Mammary epithelial cell (primary cell): ENCODE measurements at regions of chr20 and their contacts with region 1.

Region 1: GRCh38 chr20:41339507-41340326 is 904 bp upstream of the LPIN3 start:
- DNase-seq: peak; percentile 87
- H3K4me3 ChIP-seq: peak overlapping the region; percentile 28 to 47 (median 29)
- H3K27ac ChIP-seq: peak overlapping the region; percentile 64
- H3K4me1 ChIP-seq: peaks cover 20% of the 10 kb centered on the region
- H3K27me3 ChIP-seq: no peaks in the 10 kb centered on the region
- CTCF ChIP-seq: peak; percentile 88 to 97

Region 2: GRCh38 chr20:40144581-40144980 is 1195.1 kb before region 1 on chr20:
- CTCF ChIA-PET with region 1: interaction called, 12 read pairs
- dilution Hi-C with region 1: no loop called
- in situ Hi-C with region 1: no loop called
- intact Hi-C with region 1: no loop called
- DNase-seq: no peak
- H3K4me3 ChIP-seq: no peak overlapping the region
- H3K27ac ChIP-seq: no peak overlapping the region
- H3K4me1 ChIP-seq: no peaks in the 10 kb centered on the region
- H3K27me3 ChIP-seq: no peaks in the 10 kb centered on the region
- CTCF ChIP-seq: no peak

Region 3: DNA sequence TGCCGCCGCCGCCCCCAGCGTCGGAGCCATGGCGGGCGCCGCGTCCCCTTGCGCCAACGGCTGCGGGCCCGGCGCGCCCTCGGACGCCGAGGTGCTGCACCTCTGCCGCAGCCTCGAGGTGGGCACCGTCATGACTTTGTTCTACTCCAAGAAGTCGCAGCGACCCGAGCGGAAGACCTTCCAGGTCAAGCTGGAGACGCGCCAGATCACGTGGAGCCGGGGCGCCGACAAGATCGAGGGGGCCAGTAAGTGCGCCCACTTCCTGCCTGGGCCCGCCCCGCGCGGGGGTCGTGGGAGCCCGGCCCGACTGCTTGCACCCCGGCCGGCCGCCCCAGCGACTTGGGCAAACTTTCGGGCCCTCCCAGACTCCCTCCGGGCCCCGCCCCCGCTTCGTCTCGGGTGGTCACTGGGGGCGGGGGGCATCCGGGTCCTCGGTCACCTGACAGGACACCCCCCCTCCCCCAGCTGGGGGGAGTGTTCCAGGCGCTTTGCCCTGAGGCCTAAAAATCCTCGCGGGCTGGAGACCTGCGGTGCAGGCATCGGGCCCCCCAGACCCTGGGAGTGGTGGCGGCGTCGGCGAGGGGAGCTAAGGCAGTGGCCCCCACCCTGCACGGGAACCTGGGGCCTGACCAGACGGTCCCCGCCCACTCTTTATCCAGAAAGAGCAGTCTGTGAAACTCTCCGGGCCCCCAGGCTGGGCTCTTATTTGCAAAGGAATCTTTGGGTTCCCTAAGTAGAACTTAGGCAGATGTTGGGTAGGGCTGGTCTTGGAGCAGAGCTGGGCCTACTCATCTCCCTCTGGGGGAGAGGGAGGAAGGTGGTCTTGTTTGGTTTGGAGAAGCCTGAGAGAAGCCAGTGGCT is 201.9 kb before region 1 on chr20:
- CTCF ChIA-PET with region 1: interaction called, 3 read pairs
- dilution Hi-C with region 1: no loop called
- in situ Hi-C with region 1: no loop called
- intact Hi-C with region 1: loop called (anchors 1 kb)
- DNase-seq: peak; percentile 28
- H3K4me3 ChIP-seq: peak overlapping the region; percentile 60 to 83 (median 71)
- H3K27ac ChIP-seq: peak overlapping the region; percentile 55
- H3K4me1 ChIP-seq: peaks cover 56% of the 10 kb centered on the region
- H3K27me3 ChIP-seq: no peaks in the 10 kb centered on the region
- CTCF ChIP-seq: no peak

Region 4: GRCh38 chr20:41232973-41233926 is 106.5 kb before region 1 on chr20:
- CTCF ChIA-PET with region 1: interaction called, 3 read pairs
- dilution Hi-C with region 1: no loop called
- in situ Hi-C with region 1: loop called in 1 of 2 experiments (anchors 10 kb)
- intact Hi-C with region 1: loop called (anchors 1 kb)
- DNase-seq: peak; percentile 80
- H3K4me3 ChIP-seq: no peak overlapping the region
- H3K27ac ChIP-seq: peak overlapping the region; percentile 98
- H3K4me1 ChIP-seq: peaks cover 35% of the 10 kb centered on the region
- H3K27me3 ChIP-seq: no peaks in the 10 kb centered on the region
- CTCF ChIP-seq: no peak

Region 5: GRCh38 chr20:41329435-41330342 is 10.0 kb before region 1 on chr20:
- CTCF ChIA-PET with region 1: no interaction called
- dilution Hi-C with region 1: no loop called
- in situ Hi-C with region 1: no loop called
- intact Hi-C with region 1: no loop called
- DNase-seq: peak; percentile 95
- H3K4me3 ChIP-seq: no peak overlapping the region
- H3K27ac ChIP-seq: peak overlapping the region; percentile 71
- H3K4me1 ChIP-seq: peaks cover 22% of the 10 kb centered on the region
- H3K27me3 ChIP-seq: no peaks in the 10 kb centered on the region
- CTCF ChIP-seq: no peak

Region 6: DNA sequence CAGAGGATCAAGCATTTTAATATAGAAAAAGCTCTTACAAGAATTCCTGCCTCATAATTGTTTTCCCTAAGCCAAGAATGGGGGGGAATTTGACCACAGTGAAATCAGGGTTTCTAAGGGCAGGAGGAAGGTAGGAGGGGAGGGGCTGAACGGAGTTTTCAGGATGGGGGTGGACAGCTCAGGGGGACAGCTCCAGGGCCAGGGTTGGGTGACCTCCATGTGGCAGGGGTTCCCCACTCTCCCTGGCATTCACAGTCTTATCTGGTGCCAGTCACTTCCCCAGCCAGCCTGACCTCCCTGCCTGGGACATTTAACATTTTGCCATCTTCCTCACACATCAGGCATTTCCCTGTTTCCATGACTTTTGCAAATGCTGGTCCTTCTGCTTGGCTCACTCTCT is 50.2 kb after region 1 on chr20:
- CTCF ChIA-PET with region 1: interaction called, 16 read pairs
- dilution Hi-C with region 1: no loop called
- in situ Hi-C with region 1: no loop called
- intact Hi-C with region 1: no loop called
- DNase-seq: no peak
- H3K4me3 ChIP-seq: no peak overlapping the region
- H3K27ac ChIP-seq: no peak overlapping the region
- H3K4me1 ChIP-seq: peaks cover 19% of the 10 kb centered on the region
- H3K27me3 ChIP-seq: no peaks in the 10 kb centered on the region
- CTCF ChIP-seq: no peak

Region 7: DNA sequence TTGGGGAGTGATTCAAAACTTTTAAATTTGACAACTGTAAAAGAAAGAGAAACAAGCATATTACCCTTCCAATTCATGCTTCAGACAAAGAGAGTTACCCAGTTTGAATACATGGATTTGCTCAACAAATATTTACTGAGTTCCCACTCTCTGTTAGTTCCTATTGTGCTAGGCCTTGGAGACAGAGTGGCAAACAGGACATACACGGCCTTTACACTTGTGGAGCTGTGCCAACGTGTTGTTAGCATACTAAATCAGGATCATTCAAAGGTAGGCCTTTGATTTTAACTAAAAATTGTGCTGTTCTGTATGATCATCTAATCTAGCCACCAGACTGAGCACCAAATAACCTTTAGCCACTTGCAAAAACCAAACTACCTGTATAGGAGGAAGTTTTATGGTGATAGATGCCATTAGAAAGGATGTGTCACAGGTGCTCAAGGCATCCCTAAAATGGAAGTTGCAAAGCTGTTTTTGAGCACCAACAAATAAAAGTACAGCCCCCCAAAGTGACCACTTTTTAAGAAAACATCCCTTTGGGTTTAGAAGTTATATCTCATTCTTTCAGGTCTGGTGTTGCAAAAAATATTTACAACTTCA is 193.9 kb after region 1 on chr20:
- CTCF ChIA-PET with region 1: no interaction called
- dilution Hi-C with region 1: no loop called
- in situ Hi-C with region 1: no loop called
- intact Hi-C with region 1: no loop called
- DNase-seq: no peak
- H3K4me3 ChIP-seq: no peak overlapping the region
- H3K27ac ChIP-seq: no peak overlapping the region
- H3K4me1 ChIP-seq: peaks cover 3% of the 10 kb centered on the region
- H3K27me3 ChIP-seq: no peaks in the 10 kb centered on the region
- CTCF ChIP-seq: no peak

Region 8: DNA sequence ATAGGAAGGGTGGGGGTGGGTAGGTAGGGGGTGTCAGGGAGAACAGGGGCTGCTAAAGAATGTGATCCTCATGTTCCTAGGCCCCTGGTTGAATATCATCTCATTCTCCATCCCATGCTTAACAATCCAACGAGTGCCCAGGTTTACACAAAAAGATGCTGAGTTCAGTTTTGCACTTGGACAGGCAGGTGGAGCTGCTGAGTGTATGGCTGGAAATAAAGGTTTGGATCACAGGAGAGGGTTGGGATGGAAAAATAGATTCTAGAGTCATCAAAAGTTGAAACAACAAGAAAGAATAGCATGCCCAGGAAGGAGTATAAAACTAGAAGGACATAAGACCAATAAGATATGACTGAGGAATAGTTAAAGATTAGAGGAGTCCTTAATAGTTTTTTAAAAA is 264.3 kb after region 1 on chr20:
- CTCF ChIA-PET with region 1: no interaction called
- dilution Hi-C with region 1: no loop called
- in situ Hi-C with region 1: no loop called
- intact Hi-C with region 1: no loop called
- DNase-seq: no peak
- H3K4me3 ChIP-seq: no peak overlapping the region
- H3K27ac ChIP-seq: no peak overlapping the region
- H3K4me1 ChIP-seq: no peaks in the 10 kb centered on the region
- H3K27me3 ChIP-seq: no peaks in the 10 kb centered on the region
- CTCF ChIP-seq: peak in 1 of 2 donors; percentile 31

Region 9: GRCh38 chr20:41693136-41693979 is 353.6 kb after region 1 on chr20:
- CTCF ChIA-PET with region 1: interaction called, 15 read pairs
- dilution Hi-C with region 1: no loop called
- in situ Hi-C with region 1: no loop called
- intact Hi-C with region 1: loop called (anchors 2 kb)
- DNase-seq: peak; percentile 73
- H3K4me3 ChIP-seq: peak overlapping the region; percentile 75 to 82 (median 76)
- H3K27ac ChIP-seq: peak overlapping the region; percentile 20
- H3K4me1 ChIP-seq: no peaks in the 10 kb centered on the region
- H3K27me3 ChIP-seq: no peaks in the 10 kb centered on the region
- CTCF ChIP-seq: peak; percentile 13 to 48